ENCODE measurements at regions of chr11 and their contacts with region 1.

Region 1: GRCh38 chr11:63866211-63866610 is 27.3 kb downstream of the MARK2 start:
- DNase-seq: peak; percentile 58
- H3K4me3 Mint-ChIP-seq: peak overlapping the region; percentile 31
- H3K27ac Mint-ChIP-seq: peak overlapping the region; percentile 58
- H3K4me1 Mint-ChIP-seq: peaks cover 62% of the 10 kb centered on the region
- H3K27me3 Mint-ChIP-seq: no peaks in the 10 kb centered on the region

Region 2: DNA sequence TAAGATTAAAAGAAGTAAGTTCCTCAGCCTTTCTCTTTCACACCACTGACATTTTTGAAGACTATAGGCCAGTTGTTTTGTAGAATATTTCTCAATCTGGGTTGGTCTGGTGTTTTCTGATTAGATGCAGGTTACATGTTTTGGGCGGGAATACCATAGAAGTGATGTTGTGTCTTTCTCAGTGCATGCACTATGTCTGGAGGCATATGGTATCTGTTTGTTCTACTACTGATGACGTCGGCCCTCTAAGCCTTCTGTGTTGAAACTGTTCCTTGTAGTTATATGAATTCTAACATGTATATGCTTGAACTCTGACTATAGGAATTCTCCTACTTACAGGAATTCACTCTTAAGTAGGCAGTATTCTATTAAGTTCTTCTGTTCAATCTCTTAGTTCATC is 119.2 kb before region 1 on chr11:
- intact Hi-C with region 1: no loop called
- DNase-seq: no peak
- H3K4me3 Mint-ChIP-seq: no peak overlapping the region
- H3K27ac Mint-ChIP-seq: no peak overlapping the region
- H3K4me1 Mint-ChIP-seq: no peaks in the 10 kb centered on the region
- H3K27me3 Mint-ChIP-seq: no peaks in the 10 kb centered on the region

Region 3: DNA sequence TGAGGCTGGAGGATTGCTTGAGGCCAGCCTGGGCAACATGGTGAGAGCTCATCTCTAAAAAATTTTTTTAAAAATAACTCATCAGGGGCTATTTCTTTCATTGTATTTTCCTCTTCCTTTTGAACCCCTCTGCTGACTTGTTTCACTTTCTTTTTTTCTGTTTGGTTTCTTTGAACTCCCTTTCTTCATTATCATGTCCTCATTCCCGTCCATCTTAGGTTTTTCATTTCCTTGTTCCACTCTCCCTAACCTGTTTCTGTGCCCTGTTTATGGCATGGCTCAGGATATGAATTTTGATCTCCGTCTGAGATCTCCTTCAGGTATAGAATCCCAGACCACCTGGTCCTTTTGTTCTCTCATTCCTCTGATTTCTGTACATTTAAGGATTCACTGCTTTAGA is 14.8 kb before region 1 on chr11:
- intact Hi-C with region 1: loop called (anchors 2 kb)
- DNase-seq: no peak
- H3K4me3 Mint-ChIP-seq: peak overlapping the region; percentile 60
- H3K27ac Mint-ChIP-seq: peak overlapping the region; percentile 58
- H3K4me1 Mint-ChIP-seq: peaks cover 44% of the 10 kb centered on the region
- H3K27me3 Mint-ChIP-seq: no peaks in the 10 kb centered on the region

Region 4: DNA sequence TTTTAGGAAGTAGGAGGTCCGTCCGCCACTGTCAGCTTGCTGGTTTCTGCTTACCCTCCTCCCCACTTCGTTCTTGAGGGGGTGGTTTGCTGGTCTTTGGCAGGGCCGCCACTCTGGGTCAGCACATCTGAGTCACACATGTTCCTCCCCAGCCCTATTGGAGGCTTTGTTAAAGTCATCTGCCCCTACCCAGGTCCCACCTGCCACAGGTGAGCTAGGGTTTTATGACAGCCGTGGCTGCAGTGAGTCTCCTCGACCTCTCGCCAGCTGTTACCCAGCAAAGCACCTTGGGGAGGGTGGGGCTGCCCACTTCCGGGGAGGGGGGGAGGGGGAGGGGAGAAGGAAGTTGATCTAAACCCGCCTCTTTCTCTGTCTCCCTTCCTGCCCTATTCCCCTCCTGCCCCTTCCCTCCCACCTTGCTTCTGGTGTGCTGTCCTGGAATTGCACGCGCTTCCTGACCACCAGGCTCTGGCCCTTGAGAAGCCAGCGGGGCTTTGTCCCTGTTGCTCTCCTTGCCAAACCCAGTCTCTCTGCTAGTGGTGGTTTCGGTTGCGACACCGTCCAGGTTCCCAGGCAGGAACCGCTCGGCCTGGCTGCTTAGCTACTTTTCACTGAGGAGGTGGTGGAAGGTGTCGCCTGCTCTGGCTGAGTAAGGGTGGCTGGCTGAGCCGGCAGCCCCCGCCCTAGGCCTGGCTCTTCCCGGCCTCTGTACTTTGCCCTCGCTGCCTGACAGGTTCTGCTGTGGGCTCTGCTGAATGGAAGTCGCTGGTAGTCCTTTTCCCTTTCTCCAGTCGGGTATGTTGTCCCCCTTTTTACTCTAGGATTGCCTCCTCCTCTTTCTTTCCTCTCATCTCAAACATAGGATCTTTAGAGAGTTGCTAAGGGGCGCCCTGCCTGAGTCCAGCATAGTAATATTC is 22.2 kb after region 1 on chr11:
- intact Hi-C with region 1: loop called (anchors 1 kb)
- DNase-seq: peak; percentile 58
- H3K4me3 Mint-ChIP-seq: peak overlapping the region; percentile 91
- H3K27ac Mint-ChIP-seq: peak overlapping the region; percentile 85
- H3K4me1 Mint-ChIP-seq: peaks cover 69% of the 10 kb centered on the region
- H3K27me3 Mint-ChIP-seq: no peaks in the 10 kb centered on the region